Left cardiac atrium (tissue), 4 donors: ENCODE measurements at regions of chr3 and their contacts with region 1.

Region 1: DNA sequence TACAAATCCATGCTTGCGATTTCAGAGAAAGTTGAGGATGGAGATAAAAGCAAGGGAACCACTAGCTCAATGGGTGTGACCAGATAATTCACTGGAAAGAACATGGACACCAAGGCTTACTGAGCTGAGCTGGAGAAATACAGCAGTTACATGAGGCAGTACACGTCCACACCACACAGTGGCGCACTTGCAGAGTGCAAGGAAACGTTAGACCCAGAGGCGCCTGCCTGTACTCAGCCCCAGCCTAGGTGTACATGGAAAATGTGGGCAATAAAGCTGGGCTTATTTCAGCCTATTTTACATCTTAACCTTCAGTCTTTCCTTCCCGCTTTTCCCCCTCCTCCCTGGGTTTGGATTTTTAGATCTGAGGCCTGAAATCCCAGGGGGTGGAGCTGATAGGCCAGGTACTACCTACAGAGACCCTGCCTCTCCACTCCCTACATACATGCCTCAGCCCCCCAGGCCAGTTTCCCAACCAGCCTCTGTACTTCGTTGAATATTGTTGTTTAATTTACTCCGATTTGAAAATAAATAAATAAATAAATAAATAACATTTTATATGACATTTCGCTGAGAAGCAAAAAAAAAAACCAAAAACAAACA is 60.1 kb downstream of the PCOLCE2 start:
- DNase-seq: peak; percentile 83
- ATAC-seq: peak; percentile 95 to 96

Region 2: GRCh38 chr3:142993958-142994442 is 165.2 kb after region 1 on chr3:
- intact Hi-C with region 1: loop called (anchors 2 to 5 kb)
- DNase-seq: peak; percentile 71
- ATAC-seq: peak; percentile 39 to 67

Region 3: GRCh38 chr3:143171141-143171970 is 342.6 kb after region 1 on chr3:
- intact Hi-C with region 1: no loop called
- DNase-seq: no peak
- ATAC-seq: peak; percentile 30 to 53